Mammary epithelial cell (primary cell): ENCODE measurements at regions of chr1 and their contacts with region 1.

Region 1: GRCh38 chr1:17348125-17348979 is 23.6 kb upstream of the PADI6 start:
- DNase-seq: peak; percentile 95
- H3K4me3 ChIP-seq: peak overlapping the region in 1 of 3 experiments; percentile 12
- H3K27ac ChIP-seq: peak overlapping the region; percentile 81
- H3K4me1 ChIP-seq: peaks cover 15% of the 10 kb centered on the region
- H3K27me3 ChIP-seq: no peaks in the 10 kb centered on the region
- CTCF ChIP-seq: no peak

Region 2: DNA sequence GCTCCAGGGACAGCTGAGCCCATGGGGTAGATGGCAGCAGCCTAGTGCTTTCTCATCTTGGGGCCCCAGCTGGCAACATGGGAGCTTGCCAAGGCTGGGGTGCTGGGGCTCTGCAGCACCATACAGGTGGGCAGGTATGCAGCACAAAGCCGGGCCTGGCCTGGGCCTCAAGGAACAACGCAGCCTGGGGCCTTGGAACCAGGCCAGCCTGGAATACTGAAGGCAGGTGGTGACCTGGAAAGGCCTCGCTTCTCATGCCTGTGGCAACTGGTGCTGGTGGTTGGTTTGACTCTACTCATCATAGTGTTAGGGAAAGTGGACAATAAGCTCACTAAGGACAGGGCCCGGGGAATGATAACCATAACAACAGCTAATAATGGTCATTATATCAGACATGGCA is 267.5 kb before region 1 on chr1:
- CTCF ChIA-PET with region 1: no interaction called
- dilution Hi-C with region 1: loop called (anchors 5 kb)
- in situ Hi-C with region 1: no loop called
- intact Hi-C with region 1: no loop called
- DNase-seq: no peak
- H3K4me3 ChIP-seq: no peak overlapping the region
- H3K27ac ChIP-seq: no peak overlapping the region
- H3K4me1 ChIP-seq: no peaks in the 10 kb centered on the region
- H3K27me3 ChIP-seq: no peaks in the 10 kb centered on the region
- CTCF ChIP-seq: no peak

Region 3: GRCh38 chr1:17265162-17265561 is 83.2 kb before region 1 on chr1:
- CTCF ChIA-PET with region 1: no interaction called
- dilution Hi-C with region 1: loop called (anchors 5 kb)
- in situ Hi-C with region 1: no loop called
- intact Hi-C with region 1: no loop called
- DNase-seq: peak; percentile 69
- H3K4me3 ChIP-seq: no peak overlapping the region
- H3K27ac ChIP-seq: peak overlapping the region; percentile 34
- H3K4me1 ChIP-seq: peaks cover 33% of the 10 kb centered on the region
- H3K27me3 ChIP-seq: no peaks in the 10 kb centered on the region
- CTCF ChIP-seq: peak; percentile 3 to 37

Region 4: DNA sequence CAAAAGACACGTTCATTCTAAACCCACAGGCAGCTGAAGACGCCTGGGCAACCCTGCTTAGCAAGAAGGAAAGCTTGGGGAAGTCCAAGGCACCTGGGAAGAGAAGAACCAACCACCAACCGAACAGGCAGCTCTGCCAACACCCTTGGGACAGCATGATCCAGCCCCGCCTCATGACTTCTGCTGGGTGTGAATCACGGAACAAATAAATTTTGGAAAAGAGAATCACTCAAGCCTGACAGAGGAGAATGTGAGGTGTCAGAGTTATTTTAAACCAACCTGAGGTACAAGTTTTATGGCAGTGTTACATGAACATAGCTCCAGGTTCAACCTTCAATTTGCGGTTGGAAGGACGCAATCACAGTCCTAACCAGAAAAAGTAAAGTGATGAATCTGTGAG is 50.4 kb before region 1 on chr1:
- CTCF ChIA-PET with region 1: no interaction called
- dilution Hi-C with region 1: loop called (anchors 5 kb)
- in situ Hi-C with region 1: no loop called
- intact Hi-C with region 1: no loop called
- DNase-seq: peak; percentile 73
- H3K4me3 ChIP-seq: no peak overlapping the region
- H3K27ac ChIP-seq: no peak overlapping the region
- H3K4me1 ChIP-seq: peaks cover 10% of the 10 kb centered on the region
- H3K27me3 ChIP-seq: no peaks in the 10 kb centered on the region
- CTCF ChIP-seq: no peak

Region 5: DNA sequence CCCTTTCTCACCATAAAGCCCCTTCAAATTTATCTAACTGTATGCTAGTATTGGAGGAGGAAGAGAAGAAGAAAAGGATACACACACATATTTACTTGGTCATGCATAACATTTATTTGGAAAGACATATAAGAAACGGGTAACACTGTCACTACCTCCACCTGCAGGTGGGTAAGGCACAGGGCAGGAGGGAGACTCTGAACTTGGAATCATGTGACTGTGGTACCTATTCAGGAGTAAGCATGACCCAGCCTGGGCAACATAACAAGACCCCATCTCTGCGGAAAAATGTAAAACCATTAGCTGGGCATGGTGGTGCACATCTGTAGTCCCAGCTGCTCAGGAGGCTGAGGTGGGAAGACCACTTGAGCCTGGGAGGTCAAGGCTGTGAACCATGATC is 22.3 kb after region 1 on chr1:
- CTCF ChIA-PET with region 1: no interaction called
- dilution Hi-C with region 1: no loop called
- in situ Hi-C with region 1: no loop called
- intact Hi-C with region 1: loop called (anchors 2 kb)
- DNase-seq: peak; percentile 32
- H3K4me3 ChIP-seq: no peak overlapping the region
- H3K27ac ChIP-seq: no peak overlapping the region
- H3K4me1 ChIP-seq: peaks cover 32% of the 10 kb centered on the region
- H3K27me3 ChIP-seq: no peaks in the 10 kb centered on the region
- CTCF ChIP-seq: peak; percentile 72

Region 6: DNA sequence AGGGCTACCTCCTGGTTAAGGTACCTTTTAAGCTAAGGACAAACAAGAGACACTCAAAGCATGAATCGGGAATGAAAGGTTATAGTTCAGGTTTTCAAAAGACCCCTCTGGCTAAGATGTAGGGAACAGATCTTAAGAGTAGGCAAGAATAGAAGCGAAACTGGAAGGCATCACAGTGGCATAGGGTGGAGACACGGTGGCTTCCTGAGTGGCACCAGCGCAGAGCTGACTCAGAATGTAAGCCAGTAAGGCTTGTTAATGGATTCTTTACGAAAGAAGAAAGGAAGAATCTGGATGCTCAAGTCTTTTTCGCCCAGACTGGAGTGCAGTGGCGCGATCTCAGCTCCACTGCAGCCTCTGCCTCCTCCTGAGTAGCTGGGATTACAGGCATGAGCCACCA is 44.9 kb after region 1 on chr1:
- CTCF ChIA-PET with region 1: no interaction called
- dilution Hi-C with region 1: loop called (anchors 5 kb)
- in situ Hi-C with region 1: no loop called
- intact Hi-C with region 1: no loop called
- DNase-seq: no peak
- H3K4me3 ChIP-seq: no peak overlapping the region
- H3K27ac ChIP-seq: no peak overlapping the region
- H3K4me1 ChIP-seq: no peaks in the 10 kb centered on the region
- H3K27me3 ChIP-seq: no peaks in the 10 kb centered on the region
- CTCF ChIP-seq: no peak